GM12878 (cell line): ENCODE measurements at regions of chr11 and their contacts with region 1.

Region 1: GRCh38 chr11:12110714-12111548 is 541 bp downstream of the MICAL2 start:
- DNase-seq: no peak
- ATAC-seq: peak; percentile 34
- H3K4me3 ChIP-seq: peak overlapping the region; percentile 59; the same call in 1 of the 2 replicates
- H3K27ac ChIP-seq: no peak overlapping the region
- H3K4me1 ChIP-seq: no peaks in the 10 kb centered on the region; the same call in 1 of the 2 replicates
- H3K27me3 ChIP-seq: no peaks in the 10 kb centered on the region
- CTCF ChIP-seq: no peak
- EP300 ChIP-seq: no peak
- POLR2A ChIP-seq: no peak
- RAD21 ChIP-seq: no peak

Region 2: GRCh38 chr11:12140186-12140793 is 29.4 kb after region 1 on chr11:
- CTCF ChIA-PET with region 1: no interaction called
- POLR2A ChIA-PET with region 1: interaction called, 10 read pairs
- RAD21 ChIA-PET with region 1: no interaction called
- SMC1A ChIA-PET with region 1: no interaction called
- in situ Hi-C with region 1: no loop called
- intact Hi-C with region 1: no loop called
- DNase-seq: no peak
- ATAC-seq: no peak
- H3K4me3 ChIP-seq: no peak overlapping the region
- H3K27ac ChIP-seq: no peak overlapping the region
- H3K4me1 ChIP-seq: no peaks in the 10 kb centered on the region
- H3K27me3 ChIP-seq: no peaks in the 10 kb centered on the region; a peak in 1 of 4 replicates
- CTCF ChIP-seq: no peak
- EP300 ChIP-seq: no peak
- POLR2A ChIP-seq: no peak
- RAD21 ChIP-seq: no peak

Region 3: DNA sequence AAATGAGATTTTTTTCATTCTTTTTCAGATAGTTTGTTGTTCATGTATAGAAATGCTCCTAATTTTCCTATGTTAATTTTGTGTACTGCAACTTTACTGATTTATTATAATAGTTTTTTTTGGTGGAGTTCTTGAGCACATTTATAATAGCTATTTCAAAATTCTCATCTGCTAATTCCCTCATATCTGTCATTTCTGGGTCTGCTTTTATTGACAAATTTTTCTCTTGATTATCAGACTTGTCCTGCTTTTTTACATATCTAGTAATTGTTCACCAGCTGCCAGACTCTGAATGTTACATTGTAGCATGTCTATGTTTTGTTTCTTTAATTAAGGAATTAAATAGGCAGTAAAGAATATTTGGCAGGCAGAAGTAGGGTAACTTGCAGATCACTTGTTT is 205.5 kb after region 1 on chr11:
- CTCF ChIA-PET with region 1: no interaction called
- POLR2A ChIA-PET with region 1: no interaction called
- RAD21 ChIA-PET with region 1: no interaction called
- SMC1A ChIA-PET with region 1: no interaction called
- in situ Hi-C with region 1: no loop called
- intact Hi-C with region 1: no loop called
- DNase-seq: no peak
- ATAC-seq: no peak
- H3K4me3 ChIP-seq: no peak overlapping the region
- H3K27ac ChIP-seq: no peak overlapping the region
- H3K4me1 ChIP-seq: no peaks in the 10 kb centered on the region
- H3K27me3 ChIP-seq: no peaks in the 10 kb centered on the region
- CTCF ChIP-seq: no peak
- EP300 ChIP-seq: no peak
- POLR2A ChIP-seq: no peak
- RAD21 ChIP-seq: no peak